Naive thymus-derived CD4-positive, alpha-beta T cell (primary cell): ENCODE measurements at regions of chr12 and their contacts with region 1.

Region 1: GRCh38 chr12:95003213-95003920 is at the start of gene NDUFA12:
- DNase-seq: peak; percentile 89 to 95 (median 92)
- ATAC-seq: peak; percentile 100
- H3K4me3 ChIP-seq: peak within 1 kb of the TSS; percentile 72
- H3K4me3 Mint-ChIP-seq: peak within 1 kb of the TSS; percentile 87 to 97 (median 96)
- H3K27ac ChIP-seq: peak within 1 kb of the TSS; percentile 84
- H3K27ac Mint-ChIP-seq: peak within 1 kb of the TSS; percentile 86 to 97 (median 95)
- H3K4me1 ChIP-seq: peaks cover 27 to 56% of the 10 kb centered on the region in 2 donors
- H3K4me1 Mint-ChIP-seq: peaks cover 39 to 79% (median 64%) of the 10 kb centered on the region in 7 donors
- H3K27me3 ChIP-seq: no peaks in the 10 kb centered on the region
- H3K27me3 Mint-ChIP-seq: no peaks in the 10 kb centered on the region
- total RNA-seq, gene NDUFA12: 57.8 to 123 (median 68.5) TPM

Region 2: GRCh38 chr12:93378373-93379325 is 1624.7 kb before region 1 on chr12:
- CTCF ChIA-PET with region 1: no interaction called
- POLR2A ChIA-PET with region 1: no interaction called
- intact Hi-C with region 1: loop called in 1 of 2 experiments (anchors 5 kb)
- DNase-seq: peak; percentile 47 to 73 (median 69)
- ATAC-seq: peak; percentile 60
- H3K4me3 ChIP-seq: peak overlapping the region; percentile 76
- H3K4me3 Mint-ChIP-seq: peak overlapping the region; percentile 98 to 100 (median 99)
- H3K27ac ChIP-seq: peak overlapping the region; percentile 94
- H3K27ac Mint-ChIP-seq: peak overlapping the region; percentile 94 to 100 (median 99)
- H3K4me1 ChIP-seq: peaks cover 19 to 22% of the 10 kb centered on the region in 2 donors
- H3K4me1 Mint-ChIP-seq: peaks cover 34 to 62% (median 51%) of the 10 kb centered on the region in 7 donors
- H3K27me3 ChIP-seq: no peaks in the 10 kb centered on the region
- H3K27me3 Mint-ChIP-seq: no peaks in the 10 kb centered on the region

Region 3: DNA sequence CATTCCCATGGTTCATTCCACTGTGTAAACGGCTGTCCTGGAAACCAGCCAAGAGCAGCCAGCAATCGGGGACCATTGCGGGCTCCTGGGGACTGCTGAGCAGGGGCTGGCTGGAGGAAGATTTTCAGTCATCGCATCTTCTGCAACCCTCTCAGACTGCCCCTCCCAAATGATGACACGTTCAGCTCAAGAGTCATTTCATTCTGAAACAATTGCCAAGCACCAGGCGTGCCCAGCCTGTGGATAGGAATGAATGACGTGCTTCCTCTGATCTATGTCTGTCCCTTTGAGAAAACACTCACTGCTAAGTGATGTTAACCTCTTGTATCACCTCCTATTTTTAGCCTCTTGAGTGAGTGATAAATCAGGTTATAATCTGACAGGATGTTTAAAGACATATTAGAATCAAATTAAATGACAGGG is 61.9 kb before region 1 on chr12:
- CTCF ChIA-PET with region 1: no interaction called
- POLR2A ChIA-PET with region 1: no interaction called
- intact Hi-C with region 1: loop called in 1 of 2 experiments (anchors 5 kb)
- DNase-seq: peak in 2 of 9 donors; percentile 9 to 24
- ATAC-seq: peak; percentile 87
- H3K4me3 ChIP-seq: no peak overlapping the region
- H3K4me3 Mint-ChIP-seq: no peak overlapping the region
- H3K27ac ChIP-seq: no peak overlapping the region
- H3K27ac Mint-ChIP-seq: peak overlapping the region in 3 of 9 donors; percentile 7 to 78 (median 33)
- H3K4me1 ChIP-seq: peaks cover 9 to 20% of the 10 kb centered on the region in 2 donors
- H3K4me1 Mint-ChIP-seq: peaks cover 26 to 52% (median 41%) of the 10 kb centered on the region in 7 donors
- H3K27me3 ChIP-seq: no peaks in the 10 kb centered on the region
- H3K27me3 Mint-ChIP-seq: peaks cover 0 to 4% (median 0%) of the 10 kb centered on the region in 5 donors

Region 4: GRCh38 chr12:95037906-95038305 is 34.5 kb after region 1 on chr12:
- CTCF ChIA-PET with region 1: no interaction called
- POLR2A ChIA-PET with region 1: no interaction called
- intact Hi-C with region 1: loop called in 1 of 2 experiments (anchors 5 kb)
- DNase-seq: no peak
- ATAC-seq: no peak
- H3K4me3 ChIP-seq: no peak overlapping the region
- H3K4me3 Mint-ChIP-seq: no peak overlapping the region
- H3K27ac ChIP-seq: no peak overlapping the region
- H3K27ac Mint-ChIP-seq: no peak overlapping the region
- H3K4me1 ChIP-seq: peaks cover 0 to 14% of the 10 kb centered on the region in 2 donors
- H3K4me1 Mint-ChIP-seq: peaks cover 7 to 43% (median 34%) of the 10 kb centered on the region in 7 donors
- H3K27me3 ChIP-seq: no peaks in the 10 kb centered on the region
- H3K27me3 Mint-ChIP-seq: no peaks in the 10 kb centered on the region

Region 5: GRCh38 chr12:95548539-95549391 is 545.4 kb after region 1 on chr12:
- CTCF ChIA-PET with region 1: no interaction called
- POLR2A ChIA-PET with region 1: no interaction called
- intact Hi-C with region 1: loop called in 1 of 2 experiments (anchors 5 kb)
- DNase-seq: peak; percentile 66 to 81 (median 77)
- ATAC-seq: peak; percentile 94
- H3K4me3 ChIP-seq: peak overlapping the region; percentile 75
- H3K4me3 Mint-ChIP-seq: peak overlapping the region; percentile 89 to 96 (median 94)
- H3K27ac ChIP-seq: peak overlapping the region; percentile 96
- H3K27ac Mint-ChIP-seq: peak overlapping the region; percentile 70 to 98 (median 94)
- H3K4me1 ChIP-seq: peaks cover 6 to 23% of the 10 kb centered on the region in 2 donors
- H3K4me1 Mint-ChIP-seq: peaks cover 36 to 73% (median 61%) of the 10 kb centered on the region in 7 donors
- H3K27me3 ChIP-seq: no peaks in the 10 kb centered on the region
- H3K27me3 Mint-ChIP-seq: peaks cover 0 to 22% (median 7%) of the 10 kb centered on the region in 5 donors

Region 6: GRCh38 chr12:96035278-96036236 is 1032.2 kb after region 1 on chr12 and contains the start of gene LTA4H:
- CTCF ChIA-PET with region 1: no interaction called
- POLR2A ChIA-PET with region 1: no interaction called
- intact Hi-C with region 1: loop called in 1 of 2 experiments (anchors 1 kb)
- DNase-seq: peak; percentile 86 to 99 (median 97)
- ATAC-seq: peak; percentile 97
- H3K4me3 ChIP-seq: peak within 1 kb of the TSS; percentile 85
- H3K4me3 Mint-ChIP-seq: no peak within 1 kb of the TSS
- H3K27ac ChIP-seq: peak within 1 kb of the TSS; percentile 81
- H3K27ac Mint-ChIP-seq: no peak within 1 kb of the TSS
- H3K4me1 ChIP-seq: peaks cover 4 to 9% of the 10 kb centered on the region in 2 donors
- H3K4me1 Mint-ChIP-seq: peaks cover 5 to 19% (median 17%) of the 10 kb centered on the region in 7 donors
- H3K27me3 ChIP-seq: no peaks in the 10 kb centered on the region
- H3K27me3 Mint-ChIP-seq: no peaks in the 10 kb centered on the region
- total RNA-seq, gene LTA4H: 52.5 to 151 (median 63.4) TPM